ENCODE measurements at regions of chr7 and their contacts with region 1.

Region 1: GRCh38 chr7:143240291-143241168 is 18.7 kb downstream of the TAS2R40 start:
- DNase-seq: peak; percentile 81
- ATAC-seq: peak; percentile 91
- H3K4me3 ChIP-seq: no peak overlapping the region
- H3K4me3 Mint-ChIP-seq: no peak overlapping the region
- H3K27ac ChIP-seq: no peak overlapping the region
- H3K27ac Mint-ChIP-seq: no peak overlapping the region
- H3K4me1 ChIP-seq: peaks cover 4 to 8% of the 10 kb centered on the region in 2 donors
- H3K4me1 Mint-ChIP-seq: peaks cover 7% of the 10 kb centered on the region
- H3K27me3 ChIP-seq: peaks cover 0 to 3% (median 0%) of the 10 kb centered on the region in 4 experiments
- H3K27me3 Mint-ChIP-seq: peaks cover 27% of the 10 kb centered on the region
- CTCF ChIP-seq: peak; percentile 98

Region 2: DNA sequence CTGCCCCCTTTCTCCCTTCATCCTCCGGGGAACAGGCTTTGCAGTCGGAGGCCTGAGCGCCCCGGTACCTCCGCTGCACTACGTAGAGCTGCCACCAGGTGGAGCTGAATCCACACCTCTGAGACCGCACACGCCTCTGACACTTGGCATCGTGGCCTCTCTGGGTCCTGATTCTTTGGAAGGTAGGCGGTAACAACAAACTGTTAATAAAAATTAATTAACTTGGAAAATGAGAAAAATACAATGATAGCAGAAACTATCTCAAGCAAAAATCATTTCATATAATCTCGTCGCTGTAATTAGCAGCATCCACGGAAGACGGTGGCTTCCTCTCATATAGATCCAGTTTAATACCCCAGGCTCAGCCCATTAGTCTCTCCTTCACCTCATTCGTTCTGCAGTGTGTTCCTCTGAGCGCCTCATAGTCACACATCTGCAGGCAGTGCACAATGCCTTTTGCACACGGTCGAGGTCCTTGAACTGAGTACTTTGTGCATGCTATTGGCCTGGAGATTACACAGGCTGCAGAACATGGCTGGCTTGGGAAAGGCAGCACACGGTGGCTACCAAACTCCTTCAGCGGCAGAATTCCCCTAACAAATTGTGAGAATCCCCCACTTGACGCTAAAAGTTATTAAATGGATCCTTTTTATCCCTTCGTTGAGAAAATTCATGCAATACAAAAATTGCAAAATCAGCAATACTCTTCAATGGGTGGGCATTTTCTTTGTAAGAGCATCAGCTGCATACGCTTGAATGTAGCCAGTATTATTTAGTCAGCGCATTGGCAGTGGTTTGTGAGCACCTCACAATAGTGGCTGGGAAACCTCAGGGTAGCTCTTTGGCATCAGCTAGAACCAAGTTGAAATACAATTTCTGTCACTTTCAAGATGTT is 232.3 kb before region 1 on chr7:
- CTCF ChIA-PET with region 1: interaction called, 14 read pairs
- POLR2A ChIA-PET with region 1: no interaction called
- intact Hi-C with region 1: no loop called
- DNase-seq: peak; percentile 88
- ATAC-seq: peak; percentile 96
- H3K4me3 ChIP-seq: no peak overlapping the region
- H3K4me3 Mint-ChIP-seq: no peak overlapping the region
- H3K27ac ChIP-seq: no peak overlapping the region
- H3K27ac Mint-ChIP-seq: no peak overlapping the region
- H3K4me1 ChIP-seq: peaks cover 36 to 49% of the 10 kb centered on the region in 2 donors
- H3K4me1 Mint-ChIP-seq: peaks cover 49% of the 10 kb centered on the region
- H3K27me3 ChIP-seq: no peaks in the 10 kb centered on the region
- H3K27me3 Mint-ChIP-seq: no peaks in the 10 kb centered on the region
- CTCF ChIP-seq: peak; percentile 92

Region 3: DNA sequence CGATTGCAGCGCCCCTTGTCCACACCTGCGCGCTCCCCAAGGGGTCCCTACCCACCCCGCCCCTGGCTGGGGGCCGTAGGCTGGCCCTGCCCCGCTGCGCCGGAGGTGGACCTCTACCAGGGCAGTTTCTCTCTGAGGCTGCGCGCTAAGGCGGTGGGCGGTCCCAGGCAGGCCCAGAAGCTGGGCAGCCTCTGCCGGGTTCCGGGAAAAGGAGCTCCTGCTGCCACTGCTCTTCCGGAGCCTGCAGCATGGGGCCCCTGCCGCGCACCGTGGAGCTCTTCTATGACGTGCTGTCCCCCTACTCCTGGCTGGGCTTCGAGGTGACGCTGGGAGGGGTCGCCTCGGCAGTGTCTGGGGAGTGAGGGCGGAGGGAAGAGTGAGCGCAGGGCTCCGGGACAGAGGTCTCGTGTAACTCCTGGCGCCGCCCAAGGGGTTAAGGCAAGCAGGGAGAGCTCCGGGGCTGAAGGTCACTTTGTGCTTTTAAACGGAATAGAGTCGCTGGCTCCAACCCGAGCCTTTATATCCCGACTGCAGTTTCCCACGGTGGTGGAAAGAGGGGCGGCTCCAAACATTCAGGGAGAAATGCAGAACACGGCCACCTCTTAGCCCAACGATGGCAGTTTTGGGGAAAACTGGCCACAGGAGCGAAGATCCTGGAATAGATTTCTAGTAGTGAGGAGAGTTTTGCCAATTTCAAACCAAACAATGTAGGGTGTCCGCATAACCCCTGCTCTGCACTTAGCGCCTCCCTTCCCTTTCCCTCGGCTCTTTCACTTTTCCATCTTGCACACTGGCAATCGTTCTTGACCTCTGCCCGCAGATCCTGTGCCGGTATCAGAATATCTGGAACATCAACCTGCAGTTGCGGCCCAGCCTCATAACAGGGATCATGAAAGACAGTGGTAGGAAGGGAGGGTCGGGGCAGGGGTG is 23.0 kb after region 1 on chr7 and contains the start of gene GSTK1:
- CTCF ChIA-PET with region 1: interaction called, 40 read pairs
- POLR2A ChIA-PET with region 1: interaction called, 4 read pairs
- intact Hi-C with region 1: loop called (anchors 1 kb)
- DNase-seq: peak; percentile 71
- ATAC-seq: peak; percentile 95
- H3K4me3 ChIP-seq: peak within 1 kb of the TSS; percentile 73 to 99 (median 90)
- H3K4me3 Mint-ChIP-seq: peak within 1 kb of the TSS; percentile 93
- H3K27ac ChIP-seq: peak within 1 kb of the TSS; percentile 80 to 82
- H3K27ac Mint-ChIP-seq: peak within 1 kb of the TSS; percentile 91
- H3K4me1 ChIP-seq: peaks cover 28 to 38% of the 10 kb centered on the region in 2 donors
- H3K4me1 Mint-ChIP-seq: peaks cover 52% of the 10 kb centered on the region
- H3K27me3 ChIP-seq: no peaks in the 10 kb centered on the region
- H3K27me3 Mint-ChIP-seq: no peaks in the 10 kb centered on the region
- CTCF ChIP-seq: no peak
- total RNA-seq, gene GSTK1: 181 and 183 TPM in 2 replicates

Region 4: GRCh38 chr7:143299840-143300239 is 59.3 kb after region 1 on chr7:
- CTCF ChIA-PET with region 1: interaction called, 112 read pairs
- POLR2A ChIA-PET with region 1: no interaction called
- intact Hi-C with region 1: loop called (anchors 1 kb)
- DNase-seq: peak; percentile 49
- ATAC-seq: peak; percentile 73
- H3K4me3 ChIP-seq: no peak overlapping the region
- H3K4me3 Mint-ChIP-seq: no peak overlapping the region
- H3K27ac ChIP-seq: no peak overlapping the region
- H3K27ac Mint-ChIP-seq: no peak overlapping the region
- H3K4me1 ChIP-seq: peaks cover 3 to 4% of the 10 kb centered on the region in 2 donors
- H3K4me1 Mint-ChIP-seq: peaks cover 30% of the 10 kb centered on the region
- H3K27me3 ChIP-seq: no peaks in the 10 kb centered on the region
- H3K27me3 Mint-ChIP-seq: no peaks in the 10 kb centered on the region
- CTCF ChIP-seq: peak; percentile 69

Region 5: DNA sequence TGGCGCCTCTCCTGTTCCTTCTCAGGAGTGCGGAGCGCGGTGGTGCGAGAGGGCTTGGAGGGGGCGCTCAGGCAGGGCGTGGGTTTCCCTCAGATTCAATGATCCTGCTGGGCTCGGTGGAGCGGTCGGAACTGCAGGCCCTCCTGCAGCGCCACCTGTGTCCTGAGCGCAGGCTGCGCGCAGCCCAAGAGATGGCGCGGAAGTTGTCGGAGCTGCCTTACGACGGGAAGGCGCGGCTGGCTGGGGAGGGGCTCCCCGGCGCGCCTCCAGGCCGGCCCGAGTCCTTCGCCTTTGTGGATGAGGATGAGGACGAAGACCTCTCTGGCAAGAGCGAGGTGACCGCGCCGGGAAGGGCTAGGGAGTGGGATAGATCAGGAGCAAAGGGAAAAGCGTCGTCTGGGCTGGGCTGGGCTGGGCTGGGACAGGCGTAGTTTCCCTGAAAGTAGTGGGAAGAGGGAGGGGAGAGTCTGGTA is 104.9 kb after region 1 on chr7:
- CTCF ChIA-PET with region 1: interaction called, 15 read pairs
- POLR2A ChIA-PET with region 1: no interaction called
- intact Hi-C with region 1: no loop called
- DNase-seq: peak; percentile 55
- ATAC-seq: peak; percentile 88
- H3K4me3 ChIP-seq: peak overlapping the region in 3 of 5 experiments; percentile 14 to 27 (median 23)
- H3K4me3 Mint-ChIP-seq: peak overlapping the region; percentile 69
- H3K27ac ChIP-seq: no peak overlapping the region
- H3K27ac Mint-ChIP-seq: no peak overlapping the region
- H3K4me1 ChIP-seq: peaks cover 7 to 9% of the 10 kb centered on the region in 2 donors
- H3K4me1 Mint-ChIP-seq: peaks cover 7% of the 10 kb centered on the region
- H3K27me3 ChIP-seq: peaks cover 0 to 10% (median 4%) of the 10 kb centered on the region in 4 experiments
- H3K27me3 Mint-ChIP-seq: peaks cover 40% of the 10 kb centered on the region
- CTCF ChIP-seq: peak; percentile 63

Region 6: GRCh38 chr7:143408686-143409561 is 168.4 kb after region 1 on chr7 and contains the start of gene EPHA1:
- CTCF ChIA-PET with region 1: interaction called, 23 read pairs
- POLR2A ChIA-PET with region 1: no interaction called
- intact Hi-C with region 1: no loop called
- DNase-seq: peak; percentile 47
- ATAC-seq: peak; percentile 74
- H3K4me3 ChIP-seq: peak within 1 kb of the TSS in 4 of 5 experiments; percentile 18 to 38 (median 36)
- H3K4me3 Mint-ChIP-seq: peak within 1 kb of the TSS; percentile 76
- H3K27ac ChIP-seq: no peak within 1 kb of the TSS
- H3K27ac Mint-ChIP-seq: no peak within 1 kb of the TSS
- H3K4me1 ChIP-seq: peaks cover 27 to 29% of the 10 kb centered on the region in 2 donors
- H3K4me1 Mint-ChIP-seq: peaks cover 29% of the 10 kb centered on the region
- H3K27me3 ChIP-seq: peaks cover 0 to 36% (median 16%) of the 10 kb centered on the region in 4 experiments
- H3K27me3 Mint-ChIP-seq: peaks cover 32% of the 10 kb centered on the region
- CTCF ChIP-seq: no peak
- total RNA-seq, gene EPHA1: 0.12 and 0.49 TPM in 2 replicates

Region 7: DNA sequence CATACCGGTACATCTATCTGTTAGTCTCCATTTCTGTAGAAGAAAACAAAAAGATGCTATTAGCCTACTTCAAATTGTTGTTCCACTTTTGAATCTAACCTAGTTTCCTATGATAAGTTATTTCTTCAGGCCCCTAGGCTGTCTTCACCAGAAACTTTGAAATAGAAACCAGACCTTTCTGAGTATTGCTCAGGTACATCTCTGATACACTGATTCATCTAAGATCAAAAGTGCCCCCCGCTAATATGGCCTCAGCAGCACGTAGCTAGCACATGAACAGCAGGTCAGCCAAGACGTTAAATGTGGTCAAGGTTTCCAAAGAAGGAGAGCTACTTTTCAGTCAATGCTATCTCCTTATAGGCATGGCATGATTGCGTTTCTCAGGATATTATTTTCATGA is 493.3 kb after region 1 on chr7:
- CTCF ChIA-PET with region 1: interaction called, 12 read pairs
- POLR2A ChIA-PET with region 1: no interaction called
- intact Hi-C with region 1: no loop called
- DNase-seq: no peak
- ATAC-seq: no peak
- H3K4me3 ChIP-seq: no peak overlapping the region
- H3K4me3 Mint-ChIP-seq: no peak overlapping the region
- H3K27ac ChIP-seq: no peak overlapping the region
- H3K27ac Mint-ChIP-seq: no peak overlapping the region
- H3K4me1 ChIP-seq: no peaks in the 10 kb centered on the region
- H3K4me1 Mint-ChIP-seq: no peaks in the 10 kb centered on the region
- H3K27me3 ChIP-seq: no peaks in the 10 kb centered on the region
- H3K27me3 Mint-ChIP-seq: no peaks in the 10 kb centered on the region
- CTCF ChIP-seq: no peak

Measured in B cell (primary cell).